ENCODE measurements at regions of chr12 and their contacts with region 1.

Region 1: DNA sequence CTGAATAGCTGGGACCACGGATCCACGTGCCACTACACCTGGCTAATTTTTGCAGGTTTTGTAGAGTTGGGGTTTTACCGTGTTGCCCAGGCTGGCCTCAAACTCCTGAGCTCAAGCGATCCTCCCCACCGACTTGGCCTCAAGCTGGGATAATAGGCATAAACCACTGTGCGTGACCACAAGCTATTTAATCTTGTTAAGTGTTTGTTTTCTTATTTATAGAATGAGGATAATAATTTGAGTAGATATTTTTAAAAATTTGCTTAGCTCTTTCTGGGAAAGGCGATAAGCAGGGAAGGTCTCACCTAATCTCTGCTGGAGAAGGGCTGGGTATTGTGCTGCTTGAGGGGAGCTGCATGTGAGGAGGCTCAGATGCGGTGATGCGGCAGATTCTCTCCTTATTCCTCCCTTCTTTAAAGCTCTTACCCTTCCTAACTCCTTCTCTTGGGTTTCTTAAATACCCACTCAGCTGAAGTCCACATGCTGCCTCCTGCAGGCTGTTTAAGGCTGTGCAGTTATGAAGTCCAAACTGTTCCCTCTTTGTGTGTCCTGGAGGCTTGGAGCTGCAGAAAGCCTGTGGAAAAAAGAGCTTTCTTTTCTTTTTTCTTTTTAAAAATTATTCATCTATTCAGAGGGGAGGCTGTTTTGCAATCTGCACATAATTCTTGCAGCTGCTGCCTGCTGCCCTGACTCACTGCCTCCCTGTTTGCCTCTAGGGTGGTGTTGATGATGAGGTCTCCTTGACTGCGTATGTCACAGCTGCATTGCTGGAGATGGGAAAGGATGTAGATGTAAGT is 37.9 kb downstream of the A2ML1 start:
- DNase-seq: peak; percentile 43
- ATAC-seq: no peak
- H3K4me3 Mint-ChIP-seq: no peak overlapping the region
- H3K27ac Mint-ChIP-seq: no peak overlapping the region
- H3K4me1 Mint-ChIP-seq: no peaks in the 10 kb centered on the region
- H3K27me3 Mint-ChIP-seq: no peaks in the 10 kb centered on the region

Region 2: DNA sequence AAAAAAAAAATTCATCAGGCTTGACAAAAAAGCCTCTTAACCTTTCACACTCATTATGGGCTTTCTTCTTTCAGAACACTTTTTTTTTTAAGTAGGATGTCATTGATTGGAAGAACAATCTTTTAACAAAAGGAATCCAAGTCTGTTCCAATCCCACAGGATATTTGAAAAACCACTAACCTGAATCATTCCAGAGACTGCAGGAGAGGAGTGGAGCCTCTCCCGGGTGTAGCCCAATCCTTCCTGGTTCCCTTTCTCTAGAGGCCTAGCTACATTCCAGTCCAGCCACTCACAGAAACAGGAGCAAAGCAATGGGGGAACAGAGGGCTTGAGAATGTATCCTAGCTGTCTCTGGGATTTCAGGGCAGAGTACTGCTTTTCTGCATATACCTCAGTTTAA is 202.0 kb before region 1 on chr12:
- CTCF ChIA-PET with region 1: interaction called, 15 read pairs
- POLR2A ChIA-PET with region 1: no interaction called
- DNase-seq: no peak
- ATAC-seq: no peak
- H3K4me3 Mint-ChIP-seq: no peak overlapping the region
- H3K27ac Mint-ChIP-seq: no peak overlapping the region
- H3K4me1 Mint-ChIP-seq: no peaks in the 10 kb centered on the region
- H3K27me3 Mint-ChIP-seq: peaks cover 12% of the 10 kb centered on the region

Region 3: GRCh38 chr12:8681041-8681902 is 179.1 kb before region 1 on chr12:
- CTCF ChIA-PET with region 1: interaction called, 28 read pairs
- POLR2A ChIA-PET with region 1: no interaction called
- DNase-seq: no peak
- ATAC-seq: no peak
- H3K4me3 Mint-ChIP-seq: no peak overlapping the region
- H3K27ac Mint-ChIP-seq: no peak overlapping the region
- H3K4me1 Mint-ChIP-seq: no peaks in the 10 kb centered on the region
- H3K27me3 Mint-ChIP-seq: peaks cover 6% of the 10 kb centered on the region

Region 4: GRCh38 chr12:8734873-8735381 is 125.4 kb before region 1 on chr12:
- CTCF ChIA-PET with region 1: no interaction called
- POLR2A ChIA-PET with region 1: no interaction called
- DNase-seq: no peak
- ATAC-seq: no peak
- H3K4me3 Mint-ChIP-seq: no peak overlapping the region
- H3K27ac Mint-ChIP-seq: no peak overlapping the region
- H3K4me1 Mint-ChIP-seq: no peaks in the 10 kb centered on the region
- H3K27me3 Mint-ChIP-seq: no peaks in the 10 kb centered on the region

Region 5: DNA sequence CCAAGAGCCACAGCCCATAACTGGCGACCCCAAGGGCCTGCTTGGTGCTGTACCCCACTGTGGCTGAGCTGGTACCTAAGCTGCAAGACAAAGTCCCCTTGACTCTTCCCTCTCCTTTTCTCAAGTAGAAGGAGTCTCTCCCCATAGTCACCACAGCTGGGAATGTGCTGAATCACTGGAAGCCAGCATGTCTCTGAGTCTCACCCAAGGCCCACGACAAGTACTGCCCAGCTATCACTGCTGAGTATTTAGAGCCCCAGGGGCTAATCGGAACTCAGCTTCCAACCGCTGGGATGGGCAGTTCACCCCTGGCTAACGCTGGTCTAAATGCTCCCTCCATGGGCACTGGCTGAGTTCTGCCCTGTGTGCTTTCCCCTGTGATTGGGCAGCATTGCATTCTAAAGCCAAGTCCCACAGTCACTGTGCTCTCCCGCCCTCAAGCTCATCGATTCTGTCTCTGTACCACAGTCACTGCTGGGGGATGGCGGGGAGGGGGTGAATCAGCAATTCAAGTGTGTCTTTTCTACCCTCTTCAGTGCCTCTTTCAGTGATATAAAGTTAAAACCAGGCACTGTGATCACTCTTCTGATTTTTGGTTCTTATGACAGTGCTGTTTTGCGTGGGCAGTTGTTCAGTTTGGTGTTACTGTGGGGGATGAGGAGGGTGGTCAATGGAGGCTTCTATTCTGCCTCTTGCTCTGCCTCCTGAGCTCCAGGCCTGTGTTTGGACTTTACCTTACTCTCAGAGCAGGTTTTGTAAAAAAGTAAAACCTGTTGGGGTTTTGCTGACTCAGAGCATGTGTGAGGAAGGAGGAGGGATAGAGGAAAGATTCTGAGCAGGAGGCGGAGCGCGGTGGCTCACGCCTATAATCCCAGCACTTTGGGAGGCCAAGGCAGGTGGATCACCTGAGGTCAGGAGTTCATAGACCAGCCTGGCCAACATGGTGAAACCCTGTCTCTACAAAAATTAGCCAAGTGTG is 31.5 kb before region 1 on chr12:
- CTCF ChIA-PET with region 1: no interaction called
- POLR2A ChIA-PET with region 1: no interaction called
- DNase-seq: no peak
- ATAC-seq: no peak
- H3K4me3 Mint-ChIP-seq: no peak overlapping the region
- H3K27ac Mint-ChIP-seq: no peak overlapping the region
- H3K4me1 Mint-ChIP-seq: no peaks in the 10 kb centered on the region
- H3K27me3 Mint-ChIP-seq: peaks cover 4% of the 10 kb centered on the region

Region 6: DNA sequence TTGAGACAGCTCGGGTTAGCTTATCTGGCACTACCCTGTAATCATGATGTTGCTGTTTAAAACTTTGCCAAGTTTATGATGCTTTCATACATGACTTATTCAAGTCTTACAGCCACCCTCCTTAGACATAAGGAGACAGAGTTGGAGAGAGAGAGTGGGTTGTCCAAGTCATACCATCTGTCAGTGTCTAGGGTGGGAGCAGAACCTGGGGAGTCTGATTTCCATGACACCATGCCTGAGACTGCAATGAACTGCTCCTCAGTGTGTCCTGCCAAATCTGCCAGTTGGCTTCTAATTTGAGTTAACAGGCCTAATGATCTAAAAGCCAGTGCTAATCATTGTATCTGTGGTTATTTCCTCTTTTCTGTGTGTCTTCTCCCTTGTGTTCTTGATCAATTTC is 10.2 kb after region 1 on chr12:
- CTCF ChIA-PET with region 1: interaction called, 14 read pairs
- POLR2A ChIA-PET with region 1: no interaction called
- DNase-seq: no peak
- ATAC-seq: no peak
- H3K4me3 Mint-ChIP-seq: no peak overlapping the region
- H3K27ac Mint-ChIP-seq: no peak overlapping the region
- H3K4me1 Mint-ChIP-seq: no peaks in the 10 kb centered on the region
- H3K27me3 Mint-ChIP-seq: peaks cover 4% of the 10 kb centered on the region

Measured in activated CD8-positive, alpha-beta T cell treated with anti-CD3 and anti-CD28 coated beads, Interleukin-2, amount 10 ng/mL, durations not matched to agents 7 days and 5 days (primary cell).